Posterior vena cava (tissue), 2 donors: ENCODE measurements at regions of chr2 and their contacts with region 1.

Region 1: DNA sequence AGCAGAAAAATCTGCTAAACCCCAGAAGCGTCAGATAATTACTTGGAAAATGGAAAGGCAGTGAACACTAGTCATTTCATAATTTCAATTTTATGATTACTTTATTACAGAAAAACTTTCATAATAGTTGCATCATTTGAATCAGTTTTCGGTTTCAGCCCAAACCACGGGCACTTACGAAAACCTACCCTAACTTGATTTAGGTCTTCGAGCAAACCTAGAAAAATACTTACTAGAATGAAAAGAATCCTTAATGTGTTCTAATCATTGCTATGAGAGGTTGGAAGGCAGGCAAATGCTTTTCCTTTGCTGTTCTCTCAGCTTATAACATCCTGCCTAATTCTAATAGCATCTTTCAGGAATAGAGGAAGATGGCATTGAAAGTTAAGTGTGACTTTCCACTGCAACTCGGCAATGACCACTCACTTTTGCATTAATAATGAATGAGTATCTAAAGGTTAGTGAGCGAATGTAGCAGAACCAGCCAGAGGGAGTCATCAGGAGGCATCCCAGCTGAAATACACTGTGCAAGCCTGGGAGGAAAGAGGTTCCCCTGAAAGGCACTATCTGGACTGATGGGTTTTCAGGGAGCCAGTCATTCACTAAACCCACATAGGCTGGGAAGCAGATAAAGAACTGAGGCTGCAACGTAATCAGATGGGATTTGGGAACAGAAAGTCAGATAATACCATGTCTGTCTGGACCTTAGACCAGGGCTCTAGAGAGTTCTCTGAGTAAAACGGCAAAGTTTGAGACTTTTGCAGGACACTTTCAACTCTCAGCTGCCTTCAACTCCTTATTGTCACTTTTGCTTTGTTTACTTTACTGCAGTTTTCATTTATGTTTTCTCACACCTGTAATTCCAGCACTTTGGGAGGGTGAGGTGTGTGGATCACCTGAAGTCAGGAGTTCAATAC is 520.8 kb downstream of the RNF144A start:
- DNase-seq: no peak

Region 2: DNA sequence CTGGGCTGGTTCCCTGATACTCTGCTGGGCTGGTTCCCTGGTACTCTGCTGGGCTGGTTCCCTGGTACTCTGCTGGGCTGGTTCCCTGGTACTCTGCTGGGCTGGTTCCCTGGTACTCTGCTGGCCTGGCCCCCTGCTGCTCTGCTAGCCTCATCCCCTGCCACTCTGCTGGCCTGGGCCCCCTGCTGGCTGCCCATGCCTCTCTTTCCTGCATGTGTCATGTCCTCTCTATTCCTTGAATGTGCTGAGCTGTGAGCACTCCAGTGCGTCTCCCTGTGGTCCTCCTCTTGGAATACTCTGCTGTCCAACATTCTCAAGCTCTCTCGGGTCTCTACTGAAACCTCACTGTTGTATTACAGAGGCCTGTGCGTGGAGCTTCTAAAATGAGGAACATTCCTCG is 304.5 kb before region 1 on chr2:
- intact Hi-C with region 1: no loop called
- DNase-seq: no peak

Region 3: GRCh38 chr2:7456762-7457161 is 18.8 kb after region 1 on chr2:
- intact Hi-C with region 1: no loop called
- DNase-seq: no peak

Region 4: GRCh38 chr2:9106331-9107192 is 1668.6 kb after region 1 on chr2:
- intact Hi-C with region 1: loop called in 1 of 2 experiments (anchors 5 kb)
- DNase-seq: no peak